Left cardiac atrium (tissue), 4 donors: ENCODE measurements at regions of chr2 and their contacts with region 1.

Region 1: GRCh38 chr2:112433932-112434730 is 686 bp upstream of the RGPD8 start:
- DNase-seq: peak; percentile 24
- ATAC-seq: no peak

Region 2: DNA sequence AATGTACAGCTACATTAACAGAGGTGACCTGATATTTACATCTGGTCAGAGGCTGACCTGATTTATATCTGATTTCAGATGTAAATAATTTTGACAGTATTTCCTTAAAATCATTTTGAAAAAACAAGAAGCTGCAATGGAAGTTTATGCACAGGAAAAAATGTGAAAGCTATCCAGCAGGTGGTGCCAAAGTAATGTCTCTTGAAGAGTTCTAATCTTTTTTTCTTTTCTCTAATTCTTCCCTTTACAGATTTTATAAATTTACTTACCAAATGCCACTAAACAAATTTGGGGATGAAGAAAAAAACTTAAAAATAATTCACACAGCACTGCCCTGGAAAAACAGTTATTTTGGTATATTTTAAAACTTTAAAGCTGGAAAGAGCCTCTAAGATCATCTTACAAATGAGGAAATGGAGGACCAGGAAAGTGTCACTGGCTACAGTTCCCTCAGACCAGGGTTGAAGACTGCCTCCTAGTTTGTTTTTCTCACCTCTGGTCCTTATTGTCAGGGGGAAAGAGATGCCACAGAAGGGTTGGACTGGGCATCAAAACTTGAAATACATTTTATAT is 312.4 kb before region 1 on chr2:
- intact Hi-C with region 1: loop called in 1 of 2 experiments (anchors 5 kb)
- DNase-seq: no peak
- ATAC-seq: no peak

Region 3: GRCh38 chr2:112811841-112812306 is 377.7 kb after region 1 on chr2:
- intact Hi-C with region 1: no loop called
- DNase-seq: peak; percentile 38
- ATAC-seq: peak; percentile 85 to 86